Activated B cell treated with CpG ODN at 0.5 μM for 24 hours (primary cell): ENCODE measurements at regions of chr10 and their contacts with region 1.

Region 1: GRCh38 chr10:95832216-95833041 is 75.3 kb upstream of the CC2D2B start:
- DNase-seq: peak; percentile 52
- ATAC-seq: peak; percentile 88
- H3K4me3 Mint-ChIP-seq: peak overlapping the region; percentile 82
- H3K27ac Mint-ChIP-seq: peak overlapping the region; percentile 95
- H3K4me1 Mint-ChIP-seq: peaks cover 91% of the 10 kb centered on the region
- H3K27me3 Mint-ChIP-seq: no peaks in the 10 kb centered on the region
- CTCF ChIP-seq: no peak

Region 2: DNA sequence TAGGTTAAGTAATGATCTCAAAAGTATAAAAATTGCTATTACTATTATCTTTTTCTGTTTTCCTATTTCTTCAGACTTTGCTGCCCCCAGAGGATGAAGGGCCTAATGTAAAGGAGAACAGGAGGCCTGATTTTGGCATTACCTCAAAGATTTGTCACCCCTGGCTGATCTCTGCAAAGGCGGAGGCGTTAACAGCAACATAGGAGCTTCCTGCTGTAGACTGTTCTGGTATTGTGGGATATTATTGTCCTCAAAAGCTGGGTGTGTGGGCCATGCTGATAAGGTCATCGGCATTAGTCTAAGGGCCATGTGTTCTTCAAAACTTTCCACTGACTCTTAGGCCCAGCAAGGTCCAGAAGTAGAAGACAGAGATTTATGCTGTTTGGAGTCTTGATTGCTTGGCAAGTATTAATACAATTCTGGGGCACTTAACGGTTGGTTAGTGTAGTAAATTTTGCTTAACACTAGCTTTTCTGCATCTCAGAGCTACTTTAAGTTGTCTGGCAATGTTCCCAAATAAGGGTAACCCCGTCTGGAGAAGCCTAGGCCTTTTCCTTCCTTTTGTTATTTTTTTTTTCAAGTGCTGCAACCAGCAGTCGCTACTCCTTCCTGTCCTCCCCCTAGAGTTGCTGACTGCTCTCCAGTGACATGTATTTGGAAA is 90.5 kb before region 1 on chr10:
- CTCF ChIA-PET with region 1: interaction called, 4 read pairs
- POLR2A ChIA-PET with region 1: interaction called, 22 read pairs
- intact Hi-C with region 1: loop called (anchors 1 kb)
- DNase-seq: no peak
- ATAC-seq: peak; percentile 83
- H3K4me3 Mint-ChIP-seq: peak overlapping the region; percentile 85
- H3K27ac Mint-ChIP-seq: peak overlapping the region; percentile 99
- H3K4me1 Mint-ChIP-seq: peaks cover 55% of the 10 kb centered on the region
- H3K27me3 Mint-ChIP-seq: no peaks in the 10 kb centered on the region
- CTCF ChIP-seq: no peak

Region 3: GRCh38 chr10:95783741-95784140 is 48.7 kb before region 1 on chr10:
- CTCF ChIA-PET with region 1: interaction called, 4 read pairs
- POLR2A ChIA-PET with region 1: interaction called, 298 read pairs
- intact Hi-C with region 1: loop called (anchors 1 kb)
- DNase-seq: no peak
- ATAC-seq: peak; percentile 55
- H3K4me3 Mint-ChIP-seq: peak overlapping the region; percentile 53
- H3K27ac Mint-ChIP-seq: peak overlapping the region; percentile 99
- H3K4me1 Mint-ChIP-seq: peaks cover 95% of the 10 kb centered on the region
- H3K27me3 Mint-ChIP-seq: no peaks in the 10 kb centered on the region
- CTCF ChIP-seq: no peak

Region 4: DNA sequence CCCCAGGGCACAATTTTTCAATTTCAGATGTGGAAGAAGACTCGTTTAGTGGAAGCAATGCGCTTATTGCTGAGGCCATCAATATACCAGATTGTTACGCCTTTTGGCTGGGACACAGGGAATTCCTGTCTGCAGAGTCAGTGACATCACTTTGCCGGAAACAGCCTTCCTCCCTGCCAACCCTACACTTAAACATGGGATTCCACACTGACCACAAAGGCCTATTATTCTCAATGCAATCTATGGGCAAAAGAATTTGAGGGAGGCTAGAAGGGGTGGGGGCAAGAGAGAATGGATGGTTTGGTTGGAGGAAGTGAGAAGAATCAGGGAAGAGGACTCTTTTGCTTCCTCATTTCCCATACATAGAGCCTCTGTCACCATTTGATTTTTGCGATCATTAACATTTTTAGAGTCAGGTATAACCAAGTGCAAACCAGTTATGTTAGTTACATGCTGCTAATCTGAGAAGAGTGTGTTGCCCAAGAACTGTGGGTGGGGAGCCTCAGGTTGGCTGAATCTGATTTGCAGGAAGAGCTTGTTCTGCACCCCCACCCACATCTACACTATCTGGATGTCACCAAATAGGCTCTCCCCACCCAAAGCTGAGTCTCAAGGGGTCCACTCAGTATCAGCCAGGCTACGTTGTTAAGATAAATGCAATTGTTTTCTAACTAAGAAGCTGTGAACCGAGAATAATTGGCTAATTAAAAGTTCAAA is 18.3 kb before region 1 on chr10:
- CTCF ChIA-PET with region 1: interaction called, 39 read pairs
- POLR2A ChIA-PET with region 1: interaction called, 167 read pairs
- intact Hi-C with region 1: no loop called
- DNase-seq: no peak
- ATAC-seq: no peak
- H3K4me3 Mint-ChIP-seq: peak overlapping the region; percentile 37
- H3K27ac Mint-ChIP-seq: peak overlapping the region; percentile 67
- H3K4me1 Mint-ChIP-seq: peaks cover 79% of the 10 kb centered on the region
- H3K27me3 Mint-ChIP-seq: no peaks in the 10 kb centered on the region
- CTCF ChIP-seq: no peak

Region 5: GRCh38 chr10:96287392-96288105 is 455.1 kb after region 1 on chr10:
- CTCF ChIA-PET with region 1: no interaction called
- POLR2A ChIA-PET with region 1: no interaction called
- intact Hi-C with region 1: loop called (anchors 5 kb)
- DNase-seq: no peak
- ATAC-seq: peak; percentile 72
- H3K4me3 Mint-ChIP-seq: peak overlapping the region; percentile 75
- H3K27ac Mint-ChIP-seq: peak overlapping the region; percentile 96
- H3K4me1 Mint-ChIP-seq: peaks cover 75% of the 10 kb centered on the region
- H3K27me3 Mint-ChIP-seq: no peaks in the 10 kb centered on the region
- CTCF ChIP-seq: no peak